ENCODE measurements at regions of chr14 and their contacts with region 1.

Region 1: GRCh38 chr14:33792720-33793368 is 158.0 kb downstream of the EGLN3 start:
- H3K4me3 Mint-ChIP-seq: no peak overlapping the region
- H3K27ac Mint-ChIP-seq: no peak overlapping the region
- H3K4me1 Mint-ChIP-seq: peaks cover 7% of the 10 kb centered on the region
- H3K27me3 Mint-ChIP-seq: peaks cover 31% of the 10 kb centered on the region

Region 2: DNA sequence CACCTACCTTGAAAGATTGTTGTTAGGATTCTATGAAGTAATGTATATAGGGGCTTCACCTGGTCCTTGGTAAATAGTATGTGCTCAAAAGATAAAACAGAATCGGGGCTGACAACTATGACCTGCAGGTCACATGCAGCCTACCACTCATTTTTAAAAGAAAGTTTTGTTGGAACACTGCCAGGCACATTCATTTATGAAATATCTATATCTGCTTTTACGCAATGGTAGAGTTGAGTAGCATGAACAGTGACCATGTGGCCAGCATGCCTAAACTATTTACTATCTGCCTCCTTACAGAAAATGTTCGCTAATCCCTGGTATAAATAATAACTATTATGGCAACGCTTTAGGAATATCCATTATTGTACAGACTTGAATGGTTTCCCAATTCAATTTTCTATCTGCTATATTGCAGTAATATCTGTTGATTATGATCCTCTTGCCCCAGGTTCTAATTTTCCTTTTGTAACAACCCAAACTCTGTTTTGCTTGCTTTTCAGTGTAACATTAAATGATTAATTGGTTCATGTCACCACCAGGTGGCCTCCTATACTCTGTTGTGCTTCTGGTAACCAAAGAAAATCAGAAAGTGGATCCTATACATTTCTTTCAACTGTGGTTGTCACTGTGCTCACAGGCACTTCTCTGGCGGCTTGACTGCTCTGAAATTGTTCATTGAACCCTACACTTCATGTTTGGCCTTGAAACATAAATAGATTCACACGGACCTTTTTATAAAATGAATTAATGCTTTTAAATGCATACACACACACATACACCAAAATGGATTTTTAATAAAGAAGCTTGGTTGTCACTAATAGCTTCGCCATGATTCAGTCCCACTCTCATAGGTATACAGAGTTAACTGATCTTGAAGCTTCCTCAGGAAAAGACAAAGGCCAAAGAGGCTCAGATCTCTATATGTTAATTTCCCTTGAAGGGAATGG is 1081.8 kb before region 1 on chr14:
- intact Hi-C with region 1: loop called (anchors 10 kb)
- H3K4me3 Mint-ChIP-seq: no peak overlapping the region
- H3K27ac Mint-ChIP-seq: no peak overlapping the region
- H3K4me1 Mint-ChIP-seq: peaks cover 9% of the 10 kb centered on the region
- H3K27me3 Mint-ChIP-seq: peaks cover 5% of the 10 kb centered on the region

Region 3: DNA sequence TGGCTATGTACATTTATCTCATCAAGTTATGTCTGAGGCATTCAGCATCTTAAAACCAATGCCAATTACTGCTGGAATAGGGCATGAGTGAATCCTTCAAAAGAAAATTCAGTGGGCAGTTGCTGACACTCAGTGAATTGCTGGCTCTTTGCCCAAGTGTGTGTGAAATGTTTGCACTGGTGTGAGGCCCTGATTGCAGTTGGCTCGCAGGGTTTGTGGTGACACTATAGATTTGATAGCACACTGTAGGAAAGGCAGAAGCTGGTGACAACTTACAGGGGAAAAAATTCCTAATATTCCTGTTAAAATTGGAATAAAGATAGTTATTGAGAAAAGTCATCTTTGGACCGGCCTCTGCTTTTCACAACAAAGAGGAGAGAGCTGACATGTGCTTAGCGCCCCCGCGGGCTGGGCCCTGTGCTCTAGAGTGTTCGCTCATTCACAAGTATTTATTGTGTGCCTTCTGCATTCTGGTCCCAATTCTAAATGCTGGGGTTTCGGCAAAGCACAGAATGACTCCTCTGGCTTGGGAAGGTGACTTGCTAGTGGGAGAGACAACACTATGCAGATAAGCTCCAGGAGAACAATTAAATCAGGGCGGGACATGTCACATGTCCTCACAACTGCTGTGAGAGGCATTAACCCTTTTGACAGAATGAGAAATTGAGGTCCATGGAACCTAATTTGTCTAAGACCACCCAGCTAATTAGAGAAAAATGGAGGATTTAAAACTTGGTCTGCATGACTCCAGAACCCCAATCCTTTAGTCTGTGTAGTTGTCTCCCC is 435.4 kb before region 1 on chr14:
- intact Hi-C with region 1: no loop called
- H3K4me3 Mint-ChIP-seq: no peak overlapping the region
- H3K27ac Mint-ChIP-seq: no peak overlapping the region
- H3K4me1 Mint-ChIP-seq: no peaks in the 10 kb centered on the region
- H3K27me3 Mint-ChIP-seq: no peaks in the 10 kb centered on the region

Region 4: DNA sequence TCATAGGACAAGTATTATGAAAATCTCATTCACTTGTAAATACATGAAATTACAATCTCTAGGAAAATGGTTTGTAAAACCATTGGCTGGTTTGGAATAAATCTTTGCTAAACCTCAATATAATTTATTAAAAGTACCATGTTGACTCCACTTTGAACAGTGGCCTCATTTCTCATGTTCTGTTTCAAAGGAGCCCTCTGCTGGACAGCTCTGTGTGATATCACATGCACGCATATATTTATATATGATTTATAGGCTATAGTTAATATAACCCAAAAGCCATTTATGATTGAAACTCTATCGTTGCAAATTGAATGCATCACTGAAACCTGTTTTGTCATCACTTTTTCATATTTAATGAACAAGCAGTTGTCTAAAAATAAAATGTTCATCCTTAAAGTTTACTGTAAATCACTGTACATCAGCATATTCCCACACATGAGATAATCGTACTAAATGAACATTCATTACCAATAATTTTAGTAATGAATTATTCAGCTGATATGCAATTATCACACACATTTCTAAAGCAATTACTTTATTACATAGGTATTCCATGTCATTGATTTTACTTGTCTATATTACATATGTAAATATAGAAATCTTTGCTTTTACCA is 360.3 kb before region 1 on chr14:
- intact Hi-C with region 1: loop called (anchors 10 kb)
- H3K4me3 Mint-ChIP-seq: no peak overlapping the region
- H3K27ac Mint-ChIP-seq: no peak overlapping the region
- H3K4me1 Mint-ChIP-seq: peaks cover 15% of the 10 kb centered on the region
- H3K27me3 Mint-ChIP-seq: peaks cover 3% of the 10 kb centered on the region

Region 5: DNA sequence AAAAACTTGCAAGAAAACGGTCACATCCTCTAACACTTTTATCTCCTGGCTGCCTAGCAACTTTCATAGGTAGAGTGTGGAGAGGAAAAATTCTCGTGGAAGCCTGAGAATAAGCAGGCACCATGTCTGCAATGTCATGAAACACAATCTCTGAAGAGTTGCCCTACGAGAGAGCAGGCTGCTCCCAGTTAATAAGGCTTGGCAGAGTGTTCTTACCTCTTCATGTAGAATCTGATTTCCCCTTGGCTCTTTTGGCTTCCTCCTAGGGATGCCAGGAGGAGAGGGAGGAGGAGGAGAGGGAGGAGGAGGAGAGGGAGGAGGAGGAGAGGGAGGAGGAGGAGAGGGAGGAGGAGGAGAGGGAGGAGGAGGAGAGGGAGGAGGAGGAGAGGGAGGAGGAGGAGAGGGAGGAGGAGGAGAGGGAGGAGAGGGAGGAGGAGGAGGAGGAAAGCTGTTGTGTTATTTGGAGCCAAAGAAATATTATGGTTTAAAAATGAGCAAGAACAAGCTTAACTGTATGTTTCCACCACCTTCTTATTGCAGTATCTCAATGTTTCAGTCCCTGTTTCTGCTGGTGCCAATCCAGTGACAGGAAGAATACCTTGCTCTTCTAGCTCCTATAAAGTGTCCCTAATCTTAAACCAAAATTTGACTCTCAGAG is 105.2 kb after region 1 on chr14:
- intact Hi-C with region 1: no loop called
- H3K4me3 Mint-ChIP-seq: no peak overlapping the region
- H3K27ac Mint-ChIP-seq: no peak overlapping the region
- H3K4me1 Mint-ChIP-seq: no peaks in the 10 kb centered on the region
- H3K27me3 Mint-ChIP-seq: no peaks in the 10 kb centered on the region

Measured in dendritic cell treated with granulocyte-macrophage colony-stimulating factor and Interleukin-4, amounts not matched to agents 40 ng/mL and 50 ng/mL, for 4 days (primary cell).